WTC11 (cell line): ENCODE measurements at regions of chr1 and their contacts with region 1.

Region 1: GRCh38 chr1:244603498-244603897 is 49.4 kb upstream of the DESI2 start:
- DNase-seq: no peak
- ATAC-seq: no peak
- H3K4me3 Mint-ChIP-seq: no peak overlapping the region
- H3K27ac Mint-ChIP-seq: no peak overlapping the region
- H3K4me1 Mint-ChIP-seq: peaks cover 6% of the 10 kb centered on the region
- H3K27me3 Mint-ChIP-seq: no peaks in the 10 kb centered on the region
- CTCF ChIP-seq: peak; percentile 74

Region 2: GRCh38 chr1:244652699-244653466 is 49.4 kb after region 1 on chr1 and contains the start of gene DESI2:
- CTCF ChIA-PET with region 1: interaction called, 12 read pairs
- POLR2A ChIA-PET with region 1: interaction called, 6 read pairs
- DNase-seq: peak; percentile 98
- ATAC-seq: peak; percentile 94
- H3K4me3 Mint-ChIP-seq: peak within 1 kb of the TSS; percentile 81
- H3K27ac Mint-ChIP-seq: peak within 1 kb of the TSS; percentile 97
- H3K4me1 Mint-ChIP-seq: peaks cover 40% of the 10 kb centered on the region
- H3K27me3 Mint-ChIP-seq: no peaks in the 10 kb centered on the region
- CTCF ChIP-seq: peak; percentile 16; the same call in 1 of the 2 replicates
- total RNA-seq, gene DESI2: 76.1 to 108 TPM (median 76.4 TPM) in 3 replicates

Region 3: GRCh38 chr1:244801246-244801645 is 197.7 kb after region 1 on chr1:
- CTCF ChIA-PET with region 1: interaction called, 34 read pairs
- POLR2A ChIA-PET with region 1: no interaction called
- DNase-seq: peak; percentile 43
- ATAC-seq: peak; percentile 65
- H3K4me3 Mint-ChIP-seq: no peak overlapping the region
- H3K27ac Mint-ChIP-seq: no peak overlapping the region
- H3K4me1 Mint-ChIP-seq: peaks cover 13% of the 10 kb centered on the region
- H3K27me3 Mint-ChIP-seq: no peaks in the 10 kb centered on the region
- CTCF ChIP-seq: peak; percentile 62; the same call in 1 of the 2 replicates